Vagina (tissue), 2 donors: ENCODE measurements at regions of chr11 and their contacts with region 1.

Region 1: GRCh38 chr11:44095506-44096394 is at the start of gene EXT2:
- DNase-seq: no peak
- H3K4me3 ChIP-seq: peak within 1 kb of the TSS; percentile 86 to 93
- H3K27ac ChIP-seq: peak within 1 kb of the TSS; percentile 87
- H3K4me1 ChIP-seq: peaks cover 28% of the 10 kb centered on the region
- H3K27me3 ChIP-seq: no peaks in the 10 kb centered on the region
- CTCF ChIP-seq: peak; percentile 84 to 86 (median 84)
- POLR2A ChIP-seq: peak in 1 of 2 donors; percentile 8
- total RNA-seq, gene EXT2: 78.6 TPM

Region 2: GRCh38 chr11:44047931-44048431 is 47.8 kb before region 1 on chr11 and contains the start of gene ACCSL:
- intact Hi-C with region 1: loop called (anchors 1 kb)
- DNase-seq: peak; percentile 72 to 85
- H3K4me3 ChIP-seq: no peak within 1 kb of the TSS
- H3K27ac ChIP-seq: no peak within 1 kb of the TSS
- H3K4me1 ChIP-seq: no peaks in the 10 kb centered on the region
- H3K27me3 ChIP-seq: no peaks in the 10 kb centered on the region
- CTCF ChIP-seq: no peak
- POLR2A ChIP-seq: no peak
- total RNA-seq, gene ACCSL: not detected

Region 3: GRCh38 chr11:44538375-44539054 is 442.8 kb after region 1 on chr11:
- intact Hi-C with region 1: loop called (anchors 5 kb)
- DNase-seq: no peak
- H3K4me3 ChIP-seq: no peak overlapping the region
- H3K27ac ChIP-seq: no peak overlapping the region
- H3K4me1 ChIP-seq: no peaks in the 10 kb centered on the region
- H3K27me3 ChIP-seq: no peaks in the 10 kb centered on the region
- CTCF ChIP-seq: peak; percentile 92 to 95 (median 95)
- POLR2A ChIP-seq: no peak